ENCODE measurements at regions of chr4 and their contacts with region 1.

Region 1: DNA sequence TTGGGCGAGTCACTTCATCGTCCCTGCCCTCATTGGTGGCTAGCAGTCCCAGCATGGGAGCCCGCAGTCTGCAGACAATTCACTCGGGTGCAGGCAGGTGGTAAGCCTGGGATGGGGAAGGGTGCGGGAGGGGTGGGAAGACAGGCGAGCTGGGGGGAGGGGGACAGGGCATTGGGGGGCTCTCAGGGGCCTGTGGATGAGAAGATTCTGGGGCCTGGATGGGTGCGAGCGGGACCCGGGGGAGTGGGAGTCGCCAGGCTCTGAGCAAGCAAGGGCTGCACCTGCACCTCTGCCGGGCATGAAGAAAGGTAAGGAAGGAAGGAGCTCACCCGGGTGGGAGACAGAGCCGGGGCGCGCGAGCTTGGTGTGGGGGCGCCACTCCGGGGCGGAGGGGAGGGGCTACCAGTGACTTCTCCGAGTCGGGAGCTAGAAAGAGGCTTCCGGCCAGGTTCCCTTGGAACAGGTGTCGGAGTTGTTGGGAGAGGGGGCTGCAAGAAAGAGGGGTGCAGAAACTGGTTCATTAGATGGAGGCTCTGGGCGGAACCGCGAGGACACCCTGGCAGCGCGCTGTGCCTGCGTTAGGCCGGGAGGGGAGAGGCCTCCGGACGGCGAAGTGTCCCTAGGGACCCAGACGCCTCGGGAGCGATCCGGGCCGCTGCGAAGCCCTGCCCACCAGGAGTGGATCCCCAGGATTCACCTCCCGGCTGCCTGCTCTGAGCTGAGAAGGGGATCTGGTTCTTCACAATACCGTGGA is 103.4 kb upstream of the PDLIM3 start:
- DNase-seq: peak in 1 of 2 donors; percentile 83
- H3K4me3 ChIP-seq: peak overlapping the region; percentile 14 to 23
- H3K27ac ChIP-seq: peak overlapping the region; percentile 67 to 71
- H3K4me1 ChIP-seq: peaks cover 0 to 51% (median 15%) of the 10 kb centered on the region in 4 donors
- H3K27me3 ChIP-seq: no peaks in the 10 kb centered on the region
- CTCF ChIP-seq: no peak

Region 2: DNA sequence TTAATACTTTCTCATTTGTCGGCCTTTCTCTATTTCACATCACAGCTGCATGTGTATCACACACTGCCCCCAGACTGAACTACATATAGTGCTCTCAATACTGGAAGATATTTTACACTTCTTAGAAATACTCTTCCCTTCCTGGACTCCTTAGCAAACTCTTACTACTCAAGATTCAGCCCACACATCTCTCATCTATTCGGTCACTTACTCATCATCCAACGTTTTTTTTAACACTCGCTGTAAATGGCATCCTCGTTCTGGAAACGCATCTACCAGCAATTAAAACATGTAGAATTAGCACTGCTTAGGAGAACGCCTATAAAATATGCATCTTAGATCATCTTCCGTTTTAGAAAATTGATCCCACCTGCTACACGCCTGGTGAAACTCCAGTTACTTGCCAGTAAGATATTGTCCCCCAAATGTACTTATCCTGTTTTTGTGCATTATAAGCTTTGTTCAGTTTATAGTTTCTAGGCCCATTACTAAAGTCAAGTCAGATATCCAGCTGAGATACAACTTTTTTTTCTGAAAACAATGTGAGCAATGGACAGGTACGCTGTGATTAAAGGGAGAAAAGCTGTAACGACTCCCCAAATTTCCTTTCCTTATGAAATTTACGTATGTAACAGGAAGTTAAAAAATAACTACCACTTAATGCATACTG is 244.0 kb before region 1 on chr4:
- intact Hi-C with region 1: no loop called
- DNase-seq: no peak
- H3K4me3 ChIP-seq: peak overlapping the region; percentile 82 to 86
- H3K27ac ChIP-seq: peak overlapping the region; percentile 100
- H3K4me1 ChIP-seq: peaks cover 0 to 32% (median 16%) of the 10 kb centered on the region in 4 donors
- H3K27me3 ChIP-seq: no peaks in the 10 kb centered on the region
- CTCF ChIP-seq: no peak

Region 3: GRCh38 chr4:186021461-186022167 is 382.9 kb after region 1 on chr4:
- intact Hi-C with region 1: loop called (anchors 5 kb)
- DNase-seq: no peak
- H3K4me3 ChIP-seq: peak overlapping the region; percentile 28 to 44
- H3K27ac ChIP-seq: peak overlapping the region; percentile 34 to 48
- H3K4me1 ChIP-seq: peaks cover 0 to 35% (median 15%) of the 10 kb centered on the region in 4 donors
- H3K27me3 ChIP-seq: no peaks in the 10 kb centered on the region
- CTCF ChIP-seq: peak; percentile 66 to 89